Transverse colon (tissue), 4 donors: ENCODE measurements at regions of chr1 and their contacts with region 1.

Region 1: GRCh38 chr1:42747125-42747524 is 7.1 kb upstream of the CLDN19 start:
- DNase-seq: peak; percentile 54
- H3K4me3 ChIP-seq: no peak overlapping the region
- H3K27ac ChIP-seq: no peak overlapping the region
- H3K4me1 ChIP-seq: no peaks in the 10 kb centered on the region
- H3K27me3 ChIP-seq: no peaks in the 10 kb centered on the region
- CTCF ChIP-seq: peak; percentile 57 to 72 (median 62)
- EP300 ChIP-seq: no peak
- POLR2A ChIP-seq: no peak

Region 2: GRCh38 chr1:42146626-42147320 is 600.4 kb before region 1 on chr1:
- in situ Hi-C with region 1: loop called in 1 of 4 experiments (anchors 25 kb)
- intact Hi-C with region 1: no loop called
- DNase-seq: peak; percentile 91
- H3K4me3 ChIP-seq: no peak overlapping the region
- H3K27ac ChIP-seq: no peak overlapping the region
- H3K4me1 ChIP-seq: no peaks in the 10 kb centered on the region
- H3K27me3 ChIP-seq: peaks cover 24% of the 10 kb centered on the region
- CTCF ChIP-seq: peak; percentile 68 to 99 (median 79)
- EP300 ChIP-seq: peak; percentile 32
- POLR2A ChIP-seq: no peak

Region 3: GRCh38 chr1:42335050-42335808 is 411.9 kb before region 1 on chr1 and contains the start of gene FOXJ3:
- in situ Hi-C with region 1: loop called in 3 of 4 experiments (anchors 25 kb)
- intact Hi-C with region 1: no loop called
- DNase-seq: peak; percentile 94
- H3K4me3 ChIP-seq: peak within 1 kb of the TSS; percentile 80 to 100 (median 93)
- H3K27ac ChIP-seq: peak within 1 kb of the TSS; percentile 95 to 99 (median 96)
- H3K4me1 ChIP-seq: peaks cover 4 to 62% (median 35%) of the 10 kb centered on the region in 4 donors
- H3K27me3 ChIP-seq: no peaks in the 10 kb centered on the region
- CTCF ChIP-seq: peak in 1 of 5 experiments; percentile 28
- EP300 ChIP-seq: no peak
- POLR2A ChIP-seq: peak; percentile 81
- total RNA-seq, gene FOXJ3: 18.5 to 62.1 (median 38.6) TPM

Region 4: GRCh38 chr1:42576935-42577334 is 170.2 kb before region 1 on chr1:
- in situ Hi-C with region 1: loop called in 2 of 4 experiments (anchors 5 to 10 kb)
- intact Hi-C with region 1: no loop called
- DNase-seq: no peak
- H3K4me3 ChIP-seq: no peak overlapping the region
- H3K27ac ChIP-seq: no peak overlapping the region
- H3K4me1 ChIP-seq: no peaks in the 10 kb centered on the region
- H3K27me3 ChIP-seq: no peaks in the 10 kb centered on the region
- CTCF ChIP-seq: no peak
- EP300 ChIP-seq: no peak
- POLR2A ChIP-seq: no peak

Region 5: DNA sequence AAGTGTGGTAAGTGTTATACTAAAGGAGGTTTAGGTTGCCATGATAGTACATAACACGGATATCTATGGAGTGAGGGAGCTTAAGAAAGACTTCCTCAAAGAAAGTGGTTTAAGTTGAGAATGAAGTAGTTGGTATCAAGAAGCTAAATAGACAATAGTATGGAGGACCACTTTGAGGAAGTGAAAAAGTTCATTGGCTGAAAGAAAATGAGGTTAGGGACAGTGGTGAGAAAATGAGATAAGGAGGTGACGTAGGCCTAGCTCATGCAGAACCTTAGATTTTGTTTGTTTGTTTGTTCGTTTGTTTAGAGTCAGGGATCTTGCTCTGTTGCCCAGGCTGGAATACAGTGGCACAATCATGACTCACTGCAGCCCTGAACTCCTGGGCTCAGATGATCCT is 161.1 kb before region 1 on chr1:
- in situ Hi-C with region 1: loop called in 2 of 4 experiments (anchors 5 kb)
- intact Hi-C with region 1: no loop called
- DNase-seq: no peak
- H3K4me3 ChIP-seq: no peak overlapping the region
- H3K27ac ChIP-seq: no peak overlapping the region
- H3K4me1 ChIP-seq: no peaks in the 10 kb centered on the region
- H3K27me3 ChIP-seq: no peaks in the 10 kb centered on the region
- CTCF ChIP-seq: no peak
- EP300 ChIP-seq: no peak
- POLR2A ChIP-seq: no peak

Region 6: DNA sequence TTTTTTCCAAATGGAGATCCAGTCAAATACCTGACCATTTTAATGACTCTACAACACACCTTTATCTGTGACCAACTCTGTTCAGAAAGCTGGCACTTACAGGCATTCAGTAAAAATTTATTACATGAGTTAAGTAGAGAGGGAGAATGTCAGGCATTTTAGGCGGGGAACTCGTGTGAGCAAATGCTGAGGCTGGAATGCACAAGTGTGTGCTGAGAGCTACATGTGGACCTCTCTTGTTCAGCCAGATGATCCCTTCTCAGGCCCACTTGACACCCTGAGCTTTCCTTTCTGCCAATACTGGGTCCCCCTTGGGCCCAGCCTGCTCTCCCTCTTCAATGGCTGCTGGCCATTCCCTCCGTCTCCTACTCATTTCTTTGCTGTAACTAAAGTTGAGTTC is 77.2 kb before region 1 on chr1:
- in situ Hi-C with region 1: no loop called
- intact Hi-C with region 1: no loop called
- DNase-seq: no peak
- H3K4me3 ChIP-seq: no peak overlapping the region
- H3K27ac ChIP-seq: no peak overlapping the region
- H3K4me1 ChIP-seq: no peaks in the 10 kb centered on the region
- H3K27me3 ChIP-seq: no peaks in the 10 kb centered on the region
- CTCF ChIP-seq: no peak
- EP300 ChIP-seq: no peak
- POLR2A ChIP-seq: no peak

Region 7: GRCh38 chr1:42690477-42691156 is 56.5 kb before region 1 on chr1:
- in situ Hi-C with region 1: no loop called
- intact Hi-C with region 1: loop called (anchors 10 kb)
- DNase-seq: no peak
- H3K4me3 ChIP-seq: no peak overlapping the region
- H3K27ac ChIP-seq: peak overlapping the region; percentile 78 to 85 (median 84)
- H3K4me1 ChIP-seq: peaks cover 49 to 98% (median 78%) of the 10 kb centered on the region in 4 donors
- H3K27me3 ChIP-seq: no peaks in the 10 kb centered on the region
- CTCF ChIP-seq: no peak
- EP300 ChIP-seq: no peak
- POLR2A ChIP-seq: no peak